HepG2 (cell line): ENCODE measurements at regions of chr16 and their contacts with region 1.

Region 1: GRCh38 chr16:4624015-4624826 is at the start of gene MGRN1:
- DNase-seq: peak; percentile 93
- ATAC-seq: peak; percentile 90
- H3K4me3 ChIP-seq: peak within 1 kb of the TSS; percentile 86 to 91 (median 90)
- H3K27ac ChIP-seq: peak within 1 kb of the TSS; percentile 88
- H3K4me1 ChIP-seq: peaks cover 66% of the 10 kb centered on the region
- H3K27me3 ChIP-seq: no peaks in the 10 kb centered on the region; a peak in 1 of 5 replicates
- CTCF ChIP-seq: peak; percentile 98
- EP300 ChIP-seq: no peak
- POLR2A ChIP-seq: peak in 1 of 2 experiments; percentile 29; a peak in 1 of 4 replicates
- RAD21 ChIP-seq: peak; percentile 63
- total RNA-seq, gene MGRN1: 11.9 and 14.8 TPM in 2 replicates

Region 2: DNA sequence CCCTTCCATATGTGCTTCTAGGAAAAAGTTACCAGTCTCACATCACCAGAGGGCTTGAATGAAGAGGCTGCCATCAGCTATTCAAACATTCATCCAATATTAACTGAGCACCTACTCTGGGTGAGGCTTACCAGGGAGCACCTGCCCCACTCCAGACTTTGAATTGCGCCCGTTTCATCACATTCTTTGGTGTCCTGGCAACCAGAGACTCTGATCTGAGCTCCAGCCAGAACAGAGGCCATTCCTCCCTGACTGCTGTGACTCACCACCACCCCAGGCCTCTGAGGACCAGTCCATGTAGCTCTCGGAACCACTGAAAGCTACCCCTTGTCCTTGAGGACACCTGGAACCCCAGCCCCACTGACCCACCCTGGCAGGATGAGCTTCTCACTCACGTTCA is 68.1 kb before region 1 on chr16 and contains the start of gene C16orf96:
- CTCF ChIA-PET with region 1: no interaction called
- POLR2A ChIA-PET with region 1: no interaction called
- in situ Hi-C with region 1: no loop called
- intact Hi-C with region 1: no loop called
- DNase-seq: no peak
- ATAC-seq: peak; percentile 67
- H3K4me3 ChIP-seq: no peak within 1 kb of the TSS
- H3K27ac ChIP-seq: no peak within 1 kb of the TSS
- H3K4me1 ChIP-seq: peaks cover 6% of the 10 kb centered on the region; the same call in 1 of the 2 replicates
- H3K27me3 ChIP-seq: peaks cover 3 to 7% of the 10 kb centered on the region in 2 experiments; a peak in 2 of 5 replicates
- CTCF ChIP-seq: no peak
- EP300 ChIP-seq: no peak
- POLR2A ChIP-seq: no peak
- RAD21 ChIP-seq: no peak
- total RNA-seq, gene C16orf96: not detected in 2 replicates

Region 3: DNA sequence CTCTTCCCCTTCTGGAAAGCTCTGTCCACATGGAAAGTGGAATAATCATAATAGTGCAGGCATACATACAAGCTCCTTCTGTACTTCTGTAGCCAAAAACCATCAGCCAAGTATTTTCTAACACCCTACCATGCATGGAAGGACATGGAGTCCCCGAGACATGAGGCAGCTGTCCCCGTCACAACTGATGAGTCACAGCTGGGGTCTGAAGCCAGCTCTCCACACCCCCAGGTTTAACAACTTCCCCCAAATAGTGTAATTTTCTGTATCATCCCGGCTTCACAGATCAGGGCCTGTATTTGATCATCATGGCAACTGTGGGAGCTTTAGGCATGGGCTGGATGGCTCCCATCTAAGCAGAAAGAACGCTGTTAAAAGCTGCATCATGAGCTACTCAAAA is 51.5 kb before region 1 on chr16:
- CTCF ChIA-PET with region 1: no interaction called
- POLR2A ChIA-PET with region 1: no interaction called
- in situ Hi-C with region 1: no loop called
- intact Hi-C with region 1: no loop called
- DNase-seq: no peak
- ATAC-seq: no peak
- H3K4me3 ChIP-seq: no peak overlapping the region
- H3K27ac ChIP-seq: no peak overlapping the region
- H3K4me1 ChIP-seq: peaks cover 17% of the 10 kb centered on the region
- H3K27me3 ChIP-seq: peaks cover 0 to 4% of the 10 kb centered on the region in 2 experiments; a peak in 1 of 5 replicates
- CTCF ChIP-seq: no peak
- EP300 ChIP-seq: no peak
- POLR2A ChIP-seq: no peak
- RAD21 ChIP-seq: no peak

Region 4: DNA sequence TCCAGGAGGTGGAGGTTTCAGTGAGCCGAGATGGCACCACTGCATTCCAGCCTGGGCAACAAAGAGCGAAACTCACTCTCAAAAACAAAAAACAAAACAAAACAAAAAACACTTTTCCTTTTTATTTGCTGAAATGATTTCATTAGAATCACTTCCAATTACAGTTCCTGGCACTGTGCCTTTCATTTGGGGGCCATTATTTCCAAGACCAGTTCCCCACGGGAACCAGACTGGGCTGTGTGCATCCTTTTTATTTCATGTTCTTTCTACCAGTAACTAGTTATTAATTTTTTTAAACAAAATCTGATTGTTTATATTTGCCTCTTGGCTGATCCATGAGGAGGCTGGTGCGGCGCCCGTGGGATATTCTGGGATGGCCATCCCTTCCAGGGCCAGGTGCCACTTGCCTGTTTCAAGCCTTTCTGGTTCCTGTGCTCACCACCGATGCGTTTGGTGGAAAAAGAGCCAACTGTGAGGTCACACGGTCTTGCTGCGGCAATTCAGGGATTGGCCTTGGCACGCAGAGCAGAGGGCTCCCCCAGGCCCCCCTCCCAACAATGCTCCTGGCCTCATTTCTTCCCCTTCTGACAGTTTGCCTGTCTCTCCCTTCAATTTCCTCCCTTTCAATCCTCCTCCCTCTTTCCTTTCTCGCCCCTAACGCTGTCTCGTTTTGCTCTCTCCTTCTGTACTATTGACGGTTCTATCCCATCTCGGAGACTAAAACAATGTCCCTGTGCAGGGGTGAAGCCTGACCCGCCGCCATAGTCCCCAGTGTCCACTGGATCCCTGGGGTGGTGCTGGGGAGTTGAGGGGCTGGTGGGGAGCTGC is 23.0 kb before region 1 on chr16:
- CTCF ChIA-PET with region 1: no interaction called
- POLR2A ChIA-PET with region 1: no interaction called
- in situ Hi-C with region 1: no loop called
- intact Hi-C with region 1: no loop called
- DNase-seq: no peak
- ATAC-seq: no peak
- H3K4me3 ChIP-seq: no peak overlapping the region
- H3K27ac ChIP-seq: no peak overlapping the region
- H3K4me1 ChIP-seq: peaks cover 33% of the 10 kb centered on the region
- H3K27me3 ChIP-seq: peaks cover 4 to 65% of the 10 kb centered on the region in 2 experiments; a peak in 4 of 5 replicates
- CTCF ChIP-seq: no peak
- EP300 ChIP-seq: no peak
- POLR2A ChIP-seq: no peak
- RAD21 ChIP-seq: no peak

Region 5: DNA sequence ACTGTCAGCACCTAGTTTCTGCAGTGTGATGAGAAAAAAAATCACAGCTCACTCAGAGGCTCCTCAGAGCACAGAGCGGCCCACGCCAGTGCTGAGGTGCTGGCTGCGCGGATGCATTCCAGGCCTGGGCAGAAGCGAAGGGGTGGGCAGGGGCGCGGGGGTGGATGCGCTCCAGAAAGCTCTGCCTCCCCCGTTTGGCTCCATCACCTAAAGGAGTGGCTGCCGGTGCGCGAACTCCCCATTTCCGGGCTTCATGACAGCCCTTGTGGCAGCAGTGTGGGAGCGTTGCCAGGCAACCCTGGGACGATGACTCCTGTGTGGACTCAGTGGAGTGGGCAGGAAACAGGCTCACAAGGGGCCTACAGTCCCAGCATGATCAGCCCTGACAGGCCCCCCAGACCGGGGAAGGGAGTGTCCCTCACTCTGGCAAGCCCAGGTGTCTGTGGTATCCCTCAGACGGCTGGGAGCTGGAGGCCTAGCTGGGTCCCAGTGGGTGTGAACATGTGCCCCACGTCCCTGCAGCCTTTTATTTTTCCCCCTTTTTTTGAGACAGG is 36.3 kb after region 1 on chr16:
- CTCF ChIA-PET with region 1: no interaction called
- POLR2A ChIA-PET with region 1: interaction called, 39 read pairs
- in situ Hi-C with region 1: loop called (anchors 5 kb)
- intact Hi-C with region 1: loop called (anchors 2 kb)
- DNase-seq: peak; percentile 84
- ATAC-seq: peak; percentile 67
- H3K4me3 ChIP-seq: no peak overlapping the region
- H3K27ac ChIP-seq: peak overlapping the region; percentile 68
- H3K4me1 ChIP-seq: peaks cover 73% of the 10 kb centered on the region
- H3K27me3 ChIP-seq: no peaks in the 10 kb centered on the region
- CTCF ChIP-seq: peak; percentile 16; the same call in 1 of the 2 replicates
- EP300 ChIP-seq: 0 out of 4 replicates have a peak, but pooled peaks of 1 of the 2 experiments have one; percentile 5
- POLR2A ChIP-seq: no peak
- RAD21 ChIP-seq: no peak